Gastrocnemius medialis (tissue), 4 donors: ENCODE measurements at regions of chr2 and their contacts with region 1.

Region 1: DNA sequence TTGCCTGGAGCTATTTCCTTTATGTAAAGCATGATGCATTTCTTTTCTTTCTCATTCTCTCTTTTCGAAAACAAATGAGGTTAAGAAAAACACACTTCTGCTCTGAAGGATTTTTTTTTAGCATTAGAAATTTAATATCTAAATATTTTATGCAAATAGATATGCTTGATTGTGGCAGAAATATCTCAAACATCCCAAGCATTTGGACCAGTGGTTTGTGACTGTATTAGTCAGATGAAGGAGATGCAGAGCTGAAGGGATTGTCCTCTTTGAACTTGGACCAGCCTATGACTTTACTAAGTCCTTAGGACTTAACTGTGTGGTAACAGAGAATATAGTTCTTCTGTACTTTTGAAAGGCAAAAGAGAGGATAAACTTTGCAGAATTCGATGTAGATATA is 335.9 kb upstream of the NT5C1B start:
- DNase-seq: no peak
- ATAC-seq: no peak
- H3K4me3 ChIP-seq: no peak overlapping the region
- H3K27ac ChIP-seq: no peak overlapping the region
- H3K4me1 ChIP-seq: peaks cover 13 to 23% of the 10 kb centered on the region in 2 donors
- H3K27me3 ChIP-seq: no peaks in the 10 kb centered on the region
- CTCF ChIP-seq: no peak
- POLR2A ChIP-seq: no peak

Region 2: GRCh38 chr2:18915227-18915626 is 10.1 kb before region 1 on chr2:
- in situ Hi-C with region 1: no loop called
- intact Hi-C with region 1: loop called (anchors 1 kb)
- DNase-seq: no peak
- ATAC-seq: no peak
- H3K4me3 ChIP-seq: no peak overlapping the region
- H3K27ac ChIP-seq: no peak overlapping the region
- H3K4me1 ChIP-seq: peaks cover 4 to 6% of the 10 kb centered on the region in 2 donors
- H3K27me3 ChIP-seq: no peaks in the 10 kb centered on the region
- CTCF ChIP-seq: no peak
- POLR2A ChIP-seq: no peak